ENCODE measurements at regions of chr6 and their contacts with region 1.

Region 1: GRCh38 chr6:30483677-30484279 is 5.5 kb upstream of the HLA-E start:
- DNase-seq: peak; percentile 54
- H3K4me3 Mint-ChIP-seq: no peak overlapping the region
- H3K27ac Mint-ChIP-seq: no peak overlapping the region
- H3K4me1 Mint-ChIP-seq: peaks cover 44% of the 10 kb centered on the region
- H3K27me3 Mint-ChIP-seq: peaks cover 35% of the 10 kb centered on the region

Region 2: DNA sequence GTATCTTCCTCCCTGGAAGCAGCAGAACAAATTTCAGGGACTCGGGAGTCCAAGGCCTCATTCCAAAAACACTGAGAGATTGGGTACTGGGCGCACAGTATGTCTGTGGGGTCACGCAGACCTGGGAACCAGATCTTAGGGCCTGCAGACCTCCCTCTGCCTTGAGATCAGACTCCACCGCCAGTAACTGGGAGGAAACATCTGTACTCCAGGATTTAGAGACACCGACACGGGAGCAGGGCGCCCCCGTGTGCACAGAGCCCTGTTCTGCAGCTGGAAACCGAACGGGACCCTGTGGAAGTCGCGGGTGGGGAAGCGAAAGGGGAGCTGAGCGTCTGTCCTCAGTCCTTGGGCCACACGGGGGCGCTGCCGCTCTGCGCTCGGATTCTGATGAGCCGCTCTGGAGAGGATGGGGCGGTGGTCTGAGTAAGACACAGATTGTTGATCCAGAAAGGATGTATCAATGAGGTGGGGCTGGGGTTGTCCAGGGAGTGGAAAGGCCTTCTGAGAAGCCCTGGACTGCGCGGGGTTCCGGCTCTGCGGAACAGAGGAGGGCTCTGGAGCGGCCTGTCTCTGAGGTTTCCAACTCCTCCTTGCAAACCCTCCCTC is 30.2 kb before region 1 on chr6:
- CTCF ChIA-PET with region 1: interaction called, 15 read pairs
- intact Hi-C with region 1: loop called (anchors 2 kb)
- DNase-seq: peak; percentile 91
- H3K4me3 Mint-ChIP-seq: peak overlapping the region; percentile 64
- H3K27ac Mint-ChIP-seq: no peak overlapping the region
- H3K4me1 Mint-ChIP-seq: peaks cover 36% of the 10 kb centered on the region
- H3K27me3 Mint-ChIP-seq: peaks cover 81% of the 10 kb centered on the region

Region 3: DNA sequence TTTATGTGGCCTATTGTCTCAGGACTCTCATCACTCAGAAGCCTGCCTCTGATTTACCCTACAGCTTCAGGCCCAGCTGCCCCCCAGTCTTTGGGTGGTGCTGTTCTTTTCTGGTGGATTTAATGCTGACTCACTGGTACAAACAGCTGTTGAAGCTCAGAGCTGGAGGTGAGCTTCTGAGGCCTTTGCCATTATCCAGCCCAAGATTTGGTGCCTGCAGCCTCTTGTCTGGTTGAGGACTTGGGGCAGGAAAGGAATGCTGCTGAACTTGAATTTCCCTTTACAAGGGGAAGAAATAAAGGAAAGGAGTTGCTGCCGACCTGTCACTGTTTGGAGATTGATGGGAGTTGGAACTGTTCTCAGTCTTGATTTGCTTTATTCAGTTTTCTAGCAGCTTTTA is 107.2 kb after region 1 on chr6:
- CTCF ChIA-PET with region 1: interaction called, 134 read pairs
- intact Hi-C with region 1: no loop called
- DNase-seq: no peak
- H3K4me3 Mint-ChIP-seq: no peak overlapping the region
- H3K27ac Mint-ChIP-seq: peak overlapping the region; percentile 75
- H3K4me1 Mint-ChIP-seq: peaks cover 8% of the 10 kb centered on the region
- H3K27me3 Mint-ChIP-seq: no peaks in the 10 kb centered on the region

Region 4: GRCh38 chr6:30672445-30673253 is 188.9 kb after region 1 on chr6 and contains the start of gene DHX16:
- CTCF ChIA-PET with region 1: interaction called, 5 read pairs
- intact Hi-C with region 1: loop called (anchors 2 kb)
- DNase-seq: peak; percentile 94
- H3K4me3 Mint-ChIP-seq: peak within 1 kb of the TSS; percentile 80
- H3K27ac Mint-ChIP-seq: peak within 1 kb of the TSS; percentile 80
- H3K4me1 Mint-ChIP-seq: peaks cover 26% of the 10 kb centered on the region
- H3K27me3 Mint-ChIP-seq: no peaks in the 10 kb centered on the region
- total RNA-seq, gene DHX16: 25.7 to 27.7 TPM

Region 5: GRCh38 chr6:30877419-30878371 is 393.9 kb after region 1 on chr6:
- CTCF ChIA-PET with region 1: no interaction called
- intact Hi-C with region 1: loop called (anchors 5 kb)
- DNase-seq: peak; percentile 89
- H3K4me3 Mint-ChIP-seq: peak overlapping the region; percentile 68
- H3K27ac Mint-ChIP-seq: peak overlapping the region; percentile 84
- H3K4me1 Mint-ChIP-seq: peaks cover 23% of the 10 kb centered on the region
- H3K27me3 Mint-ChIP-seq: no peaks in the 10 kb centered on the region

Region 6: GRCh38 chr6:31087494-31088089 is 603.8 kb after region 1 on chr6:
- CTCF ChIA-PET with region 1: interaction called, 13 read pairs
- intact Hi-C with region 1: no loop called
- DNase-seq: peak; percentile 95
- H3K4me3 Mint-ChIP-seq: no peak overlapping the region
- H3K27ac Mint-ChIP-seq: no peak overlapping the region
- H3K4me1 Mint-ChIP-seq: peaks cover 10% of the 10 kb centered on the region
- H3K27me3 Mint-ChIP-seq: no peaks in the 10 kb centered on the region